ENCODE measurements at regions of chr16 and their contacts with region 1.

Region 1: GRCh38 chr16:81035398-81035974 is at the start of gene ATMIN:
- DNase-seq: peak; percentile 76 to 85
- H3K4me3 ChIP-seq: peak within 1 kb of the TSS; percentile 91
- H3K27ac ChIP-seq: peak within 1 kb of the TSS; percentile 24; the same call in 1 of the 2 replicates
- H3K4me1 ChIP-seq: peaks cover 16% of the 10 kb centered on the region
- H3K27me3 ChIP-seq: no peaks in the 10 kb centered on the region
- CTCF ChIP-seq: peak; percentile 84
- total RNA-seq, gene ATMIN: 17.8 and 31.2 TPM in 2 replicates

Region 2: DNA sequence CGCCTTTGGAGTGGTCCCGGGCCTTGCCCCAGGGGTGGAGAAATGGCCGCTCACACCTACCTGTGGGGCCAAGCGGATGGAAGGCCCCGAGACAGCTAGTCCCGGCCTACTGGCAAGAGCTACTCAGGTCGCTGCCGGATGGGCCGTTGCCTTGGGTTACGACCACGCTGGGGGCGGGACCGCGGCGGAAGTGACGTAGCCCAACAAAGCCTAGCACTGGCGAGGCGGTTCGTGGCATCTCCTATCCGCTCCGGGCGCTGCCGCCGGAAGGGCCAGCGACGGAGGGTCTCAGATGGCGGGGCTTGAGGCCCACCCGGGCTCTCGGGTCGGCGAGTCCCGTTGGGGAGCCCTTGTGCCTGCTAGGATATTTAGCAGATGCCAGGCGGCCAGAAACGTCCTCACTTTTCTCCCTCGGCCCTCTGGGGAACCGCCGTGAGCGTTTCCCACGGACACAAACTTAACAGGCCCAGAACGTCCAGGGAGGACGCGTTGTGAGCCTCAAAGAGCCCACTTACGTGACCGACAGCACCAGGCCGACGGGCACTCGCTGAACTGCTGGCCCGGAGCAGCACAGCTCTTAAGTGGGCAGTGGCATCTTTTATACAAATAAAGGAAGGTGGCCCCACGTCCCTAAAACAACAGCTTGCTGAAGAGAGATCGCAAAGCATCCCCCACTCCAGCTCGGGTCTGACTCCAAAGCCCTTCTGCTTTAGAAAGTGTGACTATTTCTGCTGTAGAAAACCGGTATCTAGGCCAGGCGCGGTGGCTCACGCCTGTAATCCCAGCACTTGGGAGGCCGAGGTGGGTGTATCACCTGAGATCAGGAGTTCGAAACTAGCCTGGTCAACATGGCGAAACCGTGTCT is 41.8 kb after region 1 on chr16 and contains the start of gene C16orf46:
- CTCF ChIA-PET with region 1: interaction called, 3 read pairs
- POLR2A ChIA-PET with region 1: no interaction called
- intact Hi-C with region 1: loop called (anchors 1 kb)
- DNase-seq: peak; percentile 91 to 97
- H3K4me3 ChIP-seq: peak within 1 kb of the TSS; percentile 76
- H3K27ac ChIP-seq: peak within 1 kb of the TSS; percentile 79
- H3K4me1 ChIP-seq: peaks cover 17% of the 10 kb centered on the region; the same call in 1 of the 2 replicates
- H3K27me3 ChIP-seq: no peaks in the 10 kb centered on the region
- CTCF ChIP-seq: no peak
- total RNA-seq, gene C16orf46: 0.92 and 2.3 TPM in 2 replicates

Region 3: DNA sequence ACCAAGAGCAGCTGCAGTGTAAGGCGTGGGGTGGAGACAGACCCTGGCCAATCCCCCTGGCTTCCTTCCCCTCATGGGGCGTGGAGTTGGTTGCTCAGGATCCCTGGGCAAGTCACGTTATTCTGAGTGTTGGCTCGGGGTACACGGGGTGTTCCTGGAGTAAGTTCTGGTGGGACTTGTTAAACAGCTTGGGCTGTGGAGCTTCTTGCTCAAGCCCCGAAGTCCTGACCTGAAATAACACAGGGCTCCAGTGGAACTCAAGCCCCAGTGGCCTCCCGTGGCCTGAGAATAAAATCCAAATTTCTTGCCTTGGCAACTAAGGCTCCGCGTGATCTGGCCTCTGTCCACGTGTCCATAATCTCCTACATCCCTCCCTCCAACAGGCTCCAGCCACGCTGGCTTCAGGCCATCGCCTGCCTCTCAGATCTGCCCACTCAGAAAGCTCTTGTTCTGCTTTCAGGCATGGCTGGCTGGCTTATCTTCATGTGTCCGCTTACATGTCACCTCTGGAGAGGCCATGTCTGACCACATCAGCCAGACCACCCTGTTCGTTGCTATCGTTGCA is 153.7 kb after region 1 on chr16:
- CTCF ChIA-PET with region 1: no interaction called
- POLR2A ChIA-PET with region 1: no interaction called
- intact Hi-C with region 1: loop called (anchors 5 kb)
- DNase-seq: no peak
- H3K4me3 ChIP-seq: no peak overlapping the region
- H3K27ac ChIP-seq: no peak overlapping the region
- H3K4me1 ChIP-seq: peaks cover 16% of the 10 kb centered on the region
- H3K27me3 ChIP-seq: no peaks in the 10 kb centered on the region
- CTCF ChIP-seq: no peak

Region 4: DNA sequence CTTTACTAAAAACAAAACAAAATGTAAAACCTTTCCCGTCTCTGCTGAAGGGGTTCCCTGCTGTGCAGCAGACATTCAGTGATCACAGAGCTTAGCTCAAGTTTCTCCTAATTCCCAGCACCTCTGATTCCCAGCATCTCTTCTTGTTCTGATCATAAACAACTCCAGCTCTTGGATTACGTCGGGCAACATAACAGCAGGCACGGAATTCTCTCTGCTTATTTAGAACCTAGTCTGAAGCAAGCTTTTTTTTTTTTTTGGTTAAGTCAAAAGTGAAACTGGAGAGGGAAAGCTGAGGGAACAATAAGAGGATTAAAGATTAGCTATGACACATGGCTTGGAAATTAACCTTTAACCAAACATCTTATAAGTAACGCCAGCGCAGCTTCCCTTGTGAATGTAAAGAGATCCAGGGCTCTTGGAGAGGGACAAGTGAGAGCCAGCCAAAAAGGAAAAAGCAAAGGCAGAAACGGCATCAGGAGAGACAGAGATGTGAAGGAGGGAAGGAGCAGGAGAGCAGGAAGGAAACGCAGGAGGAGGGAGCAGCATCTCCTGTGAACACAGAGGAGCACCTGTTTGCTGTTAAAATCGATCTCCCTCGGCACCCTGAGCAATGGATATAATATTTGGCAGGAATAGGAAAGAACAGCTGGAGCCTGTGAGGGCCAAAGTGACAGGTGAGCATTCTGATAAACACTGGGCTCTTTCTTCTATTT is 203.0 kb after region 1 on chr16 and contains the start of gene BCO1:
- CTCF ChIA-PET with region 1: no interaction called
- POLR2A ChIA-PET with region 1: interaction called, 21 read pairs
- intact Hi-C with region 1: no loop called
- DNase-seq: peak; percentile 22 to 78
- H3K4me3 ChIP-seq: peak within 1 kb of the TSS; percentile 55; the same call in 1 of the 2 replicates
- H3K27ac ChIP-seq: peak within 1 kb of the TSS; percentile 43
- H3K4me1 ChIP-seq: peaks cover 17% of the 10 kb centered on the region; the same call in 1 of the 2 replicates
- H3K27me3 ChIP-seq: no peaks in the 10 kb centered on the region
- CTCF ChIP-seq: no peak
- total RNA-seq, gene BCO1: 1.4 and 1.5 TPM in 2 replicates

Region 5: DNA sequence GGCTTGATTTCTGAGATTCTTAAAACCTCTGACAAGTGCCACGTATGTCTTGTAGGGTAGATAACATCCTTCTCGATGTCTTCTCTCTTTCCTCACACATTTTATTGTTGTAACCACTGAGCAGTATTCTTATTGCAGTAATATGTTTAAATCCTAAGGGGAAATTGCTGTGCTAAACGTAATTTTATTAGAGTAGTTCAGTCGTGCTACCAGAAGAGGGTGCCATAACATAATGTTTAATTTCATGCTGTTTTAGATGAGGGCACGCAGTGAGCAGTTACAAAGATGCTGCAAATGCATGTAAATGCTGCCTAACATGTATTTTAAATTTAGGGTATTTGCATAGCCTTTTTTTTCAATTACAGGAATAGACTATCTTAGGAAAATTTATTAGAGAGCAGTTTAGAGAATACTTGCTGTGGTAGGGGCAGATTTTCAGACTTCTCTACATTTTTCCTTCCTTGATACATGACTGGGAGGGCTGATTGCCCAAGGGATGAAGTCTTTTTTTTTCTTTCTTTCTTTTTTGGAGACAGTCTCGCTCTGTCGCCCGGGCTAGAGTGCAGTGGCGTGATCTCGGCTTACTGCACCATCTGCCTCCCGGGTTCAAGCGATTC is 330.9 kb after region 1 on chr16:
- CTCF ChIA-PET with region 1: no interaction called
- POLR2A ChIA-PET with region 1: no interaction called
- intact Hi-C with region 1: loop called (anchors 10 kb)
- DNase-seq: no peak
- H3K4me3 ChIP-seq: no peak overlapping the region
- H3K27ac ChIP-seq: no peak overlapping the region
- H3K4me1 ChIP-seq: no peaks in the 10 kb centered on the region
- H3K27me3 ChIP-seq: no peaks in the 10 kb centered on the region
- CTCF ChIP-seq: peak; percentile 91